ENCODE measurements at regions of chrX and their contacts with region 1.

Region 1: DNA sequence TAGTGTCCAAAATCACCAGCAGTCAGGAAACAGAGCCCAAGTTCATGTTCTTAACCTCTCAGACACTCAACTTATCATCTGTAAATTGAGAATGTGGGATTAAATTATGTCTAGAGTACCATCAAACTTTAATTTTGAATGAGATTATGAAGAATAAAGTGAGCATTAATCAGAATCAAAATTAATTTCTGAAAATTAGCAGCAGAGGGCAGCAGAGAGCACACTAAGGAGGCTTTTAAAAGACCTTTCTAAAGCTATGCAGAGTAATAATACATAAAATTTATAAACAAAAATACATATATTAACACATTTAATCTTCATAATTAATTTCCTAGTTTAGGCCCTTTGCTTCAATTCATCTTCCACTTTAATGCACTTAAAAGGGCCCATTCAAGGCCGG is 7.1 kb downstream of the TASL start:
- DNase-seq: peak in 1 of 2 experiments; percentile 1
- H3K4me3 ChIP-seq: no peak overlapping the region
- H3K4me3 Mint-ChIP-seq: no peak overlapping the region
- H3K27ac Mint-ChIP-seq: no peak overlapping the region
- H3K4me1 ChIP-seq: no peaks in the 10 kb centered on the region
- H3K4me1 Mint-ChIP-seq: no peaks in the 10 kb centered on the region
- H3K27me3 ChIP-seq: no peaks in the 10 kb centered on the region
- H3K27me3 Mint-ChIP-seq: no peaks in the 10 kb centered on the region
- CTCF ChIP-seq: peak; percentile 12 to 26

Region 2: GRCh38 chrX:30593435-30594200 is 23.1 kb after region 1 on chrX:
- CTCF ChIA-PET with region 1: interaction called, 9 read pairs
- POLR2A ChIA-PET with region 1: no interaction called
- intact Hi-C with region 1: loop called (anchors 1 kb)
- DNase-seq: peak; percentile 13 to 39
- H3K4me3 ChIP-seq: no peak overlapping the region
- H3K4me3 Mint-ChIP-seq: no peak overlapping the region
- H3K27ac Mint-ChIP-seq: no peak overlapping the region
- H3K4me1 ChIP-seq: no peaks in the 10 kb centered on the region
- H3K4me1 Mint-ChIP-seq: peaks cover 14% of the 10 kb centered on the region
- H3K27me3 ChIP-seq: no peaks in the 10 kb centered on the region
- H3K27me3 Mint-ChIP-seq: no peaks in the 10 kb centered on the region
- CTCF ChIP-seq: no peak

Region 3: DNA sequence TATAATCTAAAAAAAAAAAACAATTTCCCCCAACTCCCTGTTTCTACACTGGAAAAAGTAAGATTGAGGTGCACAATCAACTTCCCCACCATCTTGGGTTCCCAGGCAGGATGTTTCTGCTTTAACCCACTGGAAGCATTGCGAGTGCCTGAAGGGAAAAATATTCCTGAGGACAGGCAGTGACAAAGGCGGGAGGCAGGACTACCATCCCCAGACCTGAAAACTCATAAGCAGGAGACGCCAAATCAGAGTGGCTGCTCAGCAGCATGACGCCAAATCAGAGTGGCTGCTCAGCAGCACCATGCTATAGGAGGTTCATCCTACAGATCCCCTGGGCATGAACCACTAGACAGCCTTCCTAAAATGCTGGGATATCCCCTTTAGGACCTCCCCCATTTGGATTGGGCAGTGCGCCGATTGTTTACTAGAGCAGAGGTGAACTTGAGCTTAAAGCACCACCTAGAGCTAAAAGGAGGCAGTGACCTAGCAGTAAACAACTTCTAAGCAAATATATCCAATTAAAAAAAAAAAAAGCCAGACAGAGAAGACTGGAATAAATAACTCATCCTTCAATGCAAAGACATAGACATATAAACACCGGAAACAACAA is 47.8 kb after region 1 on chrX:
- CTCF ChIA-PET with region 1: interaction called, 5 read pairs
- POLR2A ChIA-PET with region 1: no interaction called
- intact Hi-C with region 1: loop called (anchors 1 kb)
- DNase-seq: no peak
- H3K4me3 ChIP-seq: no peak overlapping the region
- H3K4me3 Mint-ChIP-seq: no peak overlapping the region
- H3K27ac Mint-ChIP-seq: no peak overlapping the region
- H3K4me1 ChIP-seq: no peaks in the 10 kb centered on the region
- H3K4me1 Mint-ChIP-seq: no peaks in the 10 kb centered on the region
- H3K27me3 ChIP-seq: no peaks in the 10 kb centered on the region
- H3K27me3 Mint-ChIP-seq: no peaks in the 10 kb centered on the region
- CTCF ChIP-seq: peak in 1 of 2 experiments; percentile 12

Region 4: GRCh38 chrX:30713061-30713525 is 142.6 kb after region 1 on chrX:
- CTCF ChIA-PET with region 1: no interaction called
- POLR2A ChIA-PET with region 1: no interaction called
- intact Hi-C with region 1: loop called (anchors 1 kb)
- DNase-seq: peak; percentile 59 to 70
- H3K4me3 ChIP-seq: no peak overlapping the region
- H3K4me3 Mint-ChIP-seq: no peak overlapping the region
- H3K27ac Mint-ChIP-seq: no peak overlapping the region
- H3K4me1 ChIP-seq: no peaks in the 10 kb centered on the region
- H3K4me1 Mint-ChIP-seq: no peaks in the 10 kb centered on the region
- H3K27me3 ChIP-seq: no peaks in the 10 kb centered on the region
- H3K27me3 Mint-ChIP-seq: no peaks in the 10 kb centered on the region
- CTCF ChIP-seq: peak; percentile 48 to 78

Region 5: DNA sequence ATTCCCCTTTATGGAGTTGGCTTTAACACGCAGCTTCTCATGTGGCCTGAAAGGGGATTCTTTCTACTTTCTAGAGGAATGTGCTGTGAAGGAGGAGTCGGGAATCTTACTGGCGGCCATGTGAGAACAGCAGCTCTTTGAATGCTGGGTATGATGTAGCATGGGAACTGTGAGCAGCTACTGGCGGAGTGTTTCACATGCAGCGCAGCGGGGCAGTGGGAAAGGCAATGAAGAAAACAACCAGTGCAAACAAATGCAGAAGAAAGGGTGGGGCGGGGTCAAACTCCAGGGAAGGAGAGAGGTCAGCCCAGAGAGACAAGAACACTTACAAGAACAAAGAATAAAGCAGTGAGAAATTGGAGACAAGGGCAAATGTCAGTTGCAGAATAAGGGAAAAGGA is 865.1 kb after region 1 on chrX:
- CTCF ChIA-PET with region 1: no interaction called
- POLR2A ChIA-PET with region 1: no interaction called
- intact Hi-C with region 1: no loop called
- DNase-seq: peak; percentile 67 to 81
- H3K4me3 ChIP-seq: no peak overlapping the region
- H3K4me3 Mint-ChIP-seq: peak overlapping the region; percentile 67
- H3K27ac Mint-ChIP-seq: peak overlapping the region; percentile 64
- H3K4me1 ChIP-seq: 0 out of 2 replicates have a peak, but pooled peaks cover 10% of the 10 kb centered on the region
- H3K4me1 Mint-ChIP-seq: peaks cover 14% of the 10 kb centered on the region
- H3K27me3 ChIP-seq: no peaks in the 10 kb centered on the region
- H3K27me3 Mint-ChIP-seq: no peaks in the 10 kb centered on the region
- CTCF ChIP-seq: no peak

Measured in Caco-2 (cell line).